ENCODE measurements at regions of chr7 and their contacts with region 1.

Region 1: DNA sequence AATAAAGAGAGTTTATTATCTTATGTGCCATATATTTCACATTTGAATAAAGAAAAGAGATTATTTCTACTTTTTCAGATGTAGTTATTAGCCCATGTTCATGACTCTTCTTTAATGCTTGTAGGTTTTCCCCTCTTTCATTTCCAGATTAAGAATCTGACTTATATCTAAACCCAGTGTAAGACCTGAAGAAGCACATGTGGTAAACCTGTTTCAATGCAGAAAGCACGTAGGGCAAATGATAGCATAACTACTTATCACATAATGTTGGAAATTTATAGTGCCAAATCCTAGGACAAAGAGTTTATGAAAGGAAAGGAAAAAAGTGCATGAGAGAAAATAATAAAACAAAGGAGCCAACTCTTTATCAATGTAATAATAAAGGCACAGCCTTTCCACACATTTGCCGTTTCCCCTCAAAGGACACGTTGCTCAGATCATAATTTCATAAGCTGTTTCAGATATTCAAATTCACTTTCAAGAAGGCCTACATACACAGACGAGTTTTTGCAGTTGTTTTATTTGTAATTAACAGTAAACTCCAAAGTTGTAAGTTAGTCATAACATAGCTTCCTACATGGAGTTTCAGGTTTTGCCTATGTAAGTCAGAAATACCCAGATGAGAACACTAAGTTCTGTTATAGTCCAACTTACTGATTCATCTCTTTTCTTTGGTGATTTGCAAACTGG is 88.8 kb upstream of the MDFIC start:
- DNase-seq: no peak
- H3K4me3 Mint-ChIP-seq: peak overlapping the region; percentile 34
- H3K27ac Mint-ChIP-seq: peak overlapping the region; percentile 90
- H3K4me1 Mint-ChIP-seq: peaks cover 37% of the 10 kb centered on the region
- H3K27me3 Mint-ChIP-seq: peaks cover 2% of the 10 kb centered on the region

Region 2: GRCh38 chr7:114715907-114716306 is 117.1 kb before region 1 on chr7:
- CTCF ChIA-PET with region 1: no interaction called
- POLR2A ChIA-PET with region 1: no interaction called
- intact Hi-C with region 1: loop called (anchors 2 kb)
- DNase-seq: peak; percentile 35
- H3K4me3 Mint-ChIP-seq: no peak overlapping the region
- H3K27ac Mint-ChIP-seq: no peak overlapping the region
- H3K4me1 Mint-ChIP-seq: peaks cover 12% of the 10 kb centered on the region
- H3K27me3 Mint-ChIP-seq: peaks cover 12% of the 10 kb centered on the region

Region 3: DNA sequence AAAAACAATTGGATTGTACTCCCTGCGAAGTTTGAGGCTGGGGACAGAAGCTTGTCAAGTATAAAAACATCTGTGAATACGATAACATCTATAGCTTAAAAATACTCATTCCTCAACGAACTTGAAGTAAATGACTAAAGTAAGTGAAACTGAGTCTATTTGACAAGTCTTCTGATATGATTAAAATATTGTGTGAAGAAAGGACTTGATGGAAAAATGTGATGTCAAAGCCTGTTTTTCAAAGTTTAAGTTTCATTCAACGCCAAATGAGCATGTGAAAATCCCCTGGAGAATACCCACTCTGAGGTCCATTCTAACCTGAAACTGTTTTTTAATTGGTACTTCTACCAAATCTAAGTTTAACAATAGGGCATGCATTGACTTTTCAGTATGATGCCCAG is 33.4 kb before region 1 on chr7:
- CTCF ChIA-PET with region 1: interaction called, 8 read pairs
- POLR2A ChIA-PET with region 1: interaction called, 19 read pairs
- intact Hi-C with region 1: loop called (anchors 1 kb)
- DNase-seq: peak; percentile 22
- H3K4me3 Mint-ChIP-seq: no peak overlapping the region
- H3K27ac Mint-ChIP-seq: peak overlapping the region; percentile 77
- H3K4me1 Mint-ChIP-seq: peaks cover 56% of the 10 kb centered on the region
- H3K27me3 Mint-ChIP-seq: peaks cover 2% of the 10 kb centered on the region

Region 4: GRCh38 chr7:114889646-114890285 is 56.7 kb after region 1 on chr7:
- CTCF ChIA-PET with region 1: no interaction called
- POLR2A ChIA-PET with region 1: interaction called, 4 read pairs
- intact Hi-C with region 1: loop called (anchors 1 kb)
- DNase-seq: no peak
- H3K4me3 Mint-ChIP-seq: peak overlapping the region; percentile 10
- H3K27ac Mint-ChIP-seq: peak overlapping the region; percentile 83
- H3K4me1 Mint-ChIP-seq: peaks cover 31% of the 10 kb centered on the region
- H3K27me3 Mint-ChIP-seq: no peaks in the 10 kb centered on the region

Region 5: DNA sequence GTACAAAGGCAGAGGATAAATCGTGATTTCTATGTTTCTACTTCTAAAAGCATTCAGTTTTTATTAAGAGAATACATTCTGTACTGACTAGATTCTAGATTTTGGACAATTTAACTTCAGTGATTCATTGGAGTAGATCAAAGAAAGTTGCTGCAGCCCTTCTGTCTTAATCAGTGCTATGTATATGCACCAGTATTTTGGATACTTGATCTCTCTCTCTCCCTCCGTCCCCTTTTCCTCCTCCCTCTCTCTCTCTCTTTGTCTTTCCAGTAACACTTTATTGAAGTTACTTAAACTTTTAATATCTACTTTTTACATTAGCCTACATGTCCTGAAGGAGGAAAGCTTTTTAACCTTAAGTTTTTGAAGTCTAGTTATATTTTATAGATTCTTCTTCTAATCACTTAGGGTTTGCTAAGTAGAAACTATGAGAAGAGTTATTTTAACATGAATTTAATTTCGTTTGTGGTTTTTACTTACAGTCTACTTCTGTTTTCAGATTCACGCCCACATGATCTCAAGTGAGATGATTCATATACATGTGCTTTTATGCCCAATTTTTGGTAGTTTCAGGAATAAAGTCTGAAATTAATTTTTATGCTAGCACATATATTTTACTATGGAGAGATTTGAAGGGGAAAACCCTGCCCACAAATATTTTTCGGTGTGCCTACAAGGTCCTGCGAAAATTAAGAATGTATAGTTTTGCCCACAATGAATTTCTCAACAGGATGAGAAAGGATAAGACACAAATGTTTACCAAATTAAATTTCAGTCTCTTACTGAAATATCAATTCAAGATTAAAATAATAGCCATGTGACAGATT is 98.0 kb after region 1 on chr7:
- CTCF ChIA-PET with region 1: no interaction called
- POLR2A ChIA-PET with region 1: interaction called, 4 read pairs
- intact Hi-C with region 1: loop called (anchors 1 kb)
- DNase-seq: no peak
- H3K4me3 Mint-ChIP-seq: peak overlapping the region; percentile 67
- H3K27ac Mint-ChIP-seq: no peak overlapping the region
- H3K4me1 Mint-ChIP-seq: peaks cover 38% of the 10 kb centered on the region
- H3K27me3 Mint-ChIP-seq: no peaks in the 10 kb centered on the region

Region 6: GRCh38 chr7:115183431-115184057 is 350.5 kb after region 1 on chr7:
- CTCF ChIA-PET with region 1: no interaction called
- POLR2A ChIA-PET with region 1: no interaction called
- intact Hi-C with region 1: no loop called
- DNase-seq: no peak
- H3K4me3 Mint-ChIP-seq: no peak overlapping the region
- H3K27ac Mint-ChIP-seq: no peak overlapping the region
- H3K4me1 Mint-ChIP-seq: peaks cover 21% of the 10 kb centered on the region
- H3K27me3 Mint-ChIP-seq: no peaks in the 10 kb centered on the region

Measured in activated CD4-positive, alpha-beta memory T cell treated with anti-CD3 and anti-CD28 coated beads for 36 hours (primary cell).